CD8-positive, alpha-beta T cell (primary cell): ENCODE measurements at regions of chr9 and their contacts with region 1.

Region 1: GRCh38 chr9:129626079-129626624 is at the start of gene NTMT1:
- DNase-seq: peak; percentile 86 to 96 (median 92)
- ATAC-seq: peak; percentile 74
- H3K4me3 ChIP-seq: peak within 1 kb of the TSS; percentile 94 to 99
- H3K4me3 Mint-ChIP-seq: peak within 1 kb of the TSS; percentile 83
- H3K27ac ChIP-seq: peak within 1 kb of the TSS; percentile 95 to 98
- H3K27ac Mint-ChIP-seq: peak within 1 kb of the TSS; percentile 98
- H3K4me1 ChIP-seq: peaks cover 51% of the 10 kb centered on the region
- H3K4me1 Mint-ChIP-seq: peaks cover 56% of the 10 kb centered on the region
- H3K27me3 ChIP-seq: no peaks in the 10 kb centered on the region
- H3K27me3 Mint-ChIP-seq: peaks cover 11% of the 10 kb centered on the region
- CTCF ChIP-seq: no peak
- total RNA-seq, gene NTMT1: 48.1 to 51.1 TPM

Region 2: DNA sequence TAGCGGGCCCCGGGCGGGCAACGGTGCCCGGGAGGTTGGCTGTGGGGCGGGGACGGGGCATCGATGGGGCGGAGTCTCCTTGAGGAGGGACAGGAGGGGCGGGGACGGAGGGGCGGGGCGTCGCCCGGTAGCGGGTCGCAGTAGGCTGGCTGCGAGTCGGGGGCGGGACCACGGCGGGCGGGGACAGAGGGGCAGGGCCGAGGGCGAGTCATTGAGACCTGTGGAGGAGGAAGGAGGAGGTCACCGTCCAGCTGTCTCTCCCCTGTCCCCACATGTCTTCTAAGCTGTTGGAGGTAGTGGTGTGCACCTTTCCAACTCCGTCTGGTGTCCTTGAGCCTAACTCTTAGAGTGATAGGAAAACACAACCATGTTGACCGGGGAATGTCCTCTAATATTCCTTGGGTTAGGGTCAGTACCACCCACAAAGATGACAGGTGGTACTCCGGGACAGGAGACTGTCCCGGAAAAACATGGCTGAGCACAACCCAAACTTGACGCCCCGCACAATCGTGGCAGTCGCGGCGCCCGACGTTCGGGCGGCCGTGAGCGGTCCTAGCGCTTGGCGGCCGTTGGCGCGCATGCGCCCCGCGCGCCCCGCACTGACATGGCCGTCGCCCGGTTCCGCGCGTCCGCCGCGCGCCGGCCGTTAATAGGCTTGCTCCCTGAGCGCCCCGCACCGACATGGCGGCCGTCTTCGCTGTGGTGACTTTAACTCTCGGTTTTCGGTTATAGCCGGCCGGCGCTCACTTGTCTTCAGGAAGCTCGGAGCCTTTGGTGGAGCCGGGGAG is 515.2 kb before region 1 on chr9 and contains the starts of genes CRAT and PTPA:
- CTCF ChIA-PET with region 1: no interaction called
- POLR2A ChIA-PET with region 1: no interaction called
- intact Hi-C with region 1: loop called in 1 of 2 experiments (anchors 1 kb)
- DNase-seq: peak; percentile 91 to 97 (median 96)
- ATAC-seq: peak; percentile 88
- H3K4me3 ChIP-seq: peak within 1 kb of the TSS; percentile 69 to 85
- H3K4me3 Mint-ChIP-seq: peak within 1 kb of the TSS; percentile 93
- H3K27ac ChIP-seq: peak within 1 kb of the TSS; percentile 79 to 81
- H3K27ac Mint-ChIP-seq: peak within 1 kb of the TSS; percentile 91
- H3K4me1 ChIP-seq: peaks cover 21% of the 10 kb centered on the region
- H3K4me1 Mint-ChIP-seq: peaks cover 39% of the 10 kb centered on the region
- H3K27me3 ChIP-seq: no peaks in the 10 kb centered on the region
- H3K27me3 Mint-ChIP-seq: no peaks in the 10 kb centered on the region
- CTCF ChIP-seq: no peak
- total RNA-seq, gene CRAT: 5.6 to 6.3 TPM
- total RNA-seq, gene PTPA: 24.7 to 26.8 TPM

Region 3: GRCh38 chr9:129139993-129140396 is 486.2 kb before region 1 on chr9:
- CTCF ChIA-PET with region 1: interaction called, 152 read pairs
- POLR2A ChIA-PET with region 1: interaction called, 7 read pairs
- intact Hi-C with region 1: loop called (anchors 1 kb)
- DNase-seq: peak; percentile 35 to 92 (median 80)
- ATAC-seq: peak; percentile 89
- H3K4me3 ChIP-seq: peak overlapping the region; percentile 55 to 58
- H3K4me3 Mint-ChIP-seq: peak overlapping the region; percentile 90
- H3K27ac ChIP-seq: peak overlapping the region; percentile 86 to 94
- H3K27ac Mint-ChIP-seq: peak overlapping the region; percentile 95
- H3K4me1 ChIP-seq: peaks cover 36% of the 10 kb centered on the region
- H3K4me1 Mint-ChIP-seq: peaks cover 34% of the 10 kb centered on the region
- H3K27me3 ChIP-seq: no peaks in the 10 kb centered on the region
- H3K27me3 Mint-ChIP-seq: no peaks in the 10 kb centered on the region
- CTCF ChIP-seq: no peak

Region 4: DNA sequence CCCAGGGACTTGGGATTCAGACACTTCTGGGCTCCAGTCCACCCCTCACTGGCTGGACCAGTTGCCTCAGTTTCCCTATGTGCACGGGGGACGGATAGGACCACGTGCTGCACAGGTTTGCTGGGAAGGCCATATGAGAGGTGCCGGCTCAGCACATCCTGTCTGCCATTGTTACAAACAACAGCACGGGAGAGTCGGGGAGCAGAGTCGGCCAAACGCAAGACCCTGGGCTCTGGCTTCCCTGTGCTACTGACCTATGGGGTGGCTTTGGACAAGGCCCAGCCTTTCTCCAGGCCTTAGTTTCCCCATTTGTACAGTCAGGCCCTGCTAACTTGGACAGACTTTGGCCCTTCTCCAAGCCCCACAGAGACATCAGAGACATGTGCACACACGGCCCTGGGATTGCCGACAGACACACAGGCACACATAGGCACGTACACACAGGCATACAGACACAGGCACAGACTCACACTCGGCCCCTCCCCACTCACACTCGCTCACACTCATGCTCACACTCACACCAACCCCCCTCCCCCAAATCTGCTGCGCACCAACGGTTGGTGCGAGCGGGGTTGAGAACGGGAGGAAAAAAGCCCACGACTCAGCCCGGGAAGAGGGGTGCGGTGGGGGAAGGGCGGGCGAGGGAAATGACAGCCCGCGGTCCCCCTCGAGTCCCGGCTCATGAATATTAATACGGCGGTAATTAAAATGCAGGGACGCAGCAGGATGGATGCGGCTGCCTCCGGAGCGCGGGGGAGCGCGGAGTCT is 138.3 kb before region 1 on chr9:
- CTCF ChIA-PET with region 1: no interaction called
- POLR2A ChIA-PET with region 1: no interaction called
- intact Hi-C with region 1: loop called in 1 of 2 experiments (anchors 5 kb)
- DNase-seq: peak in 3 of 9 experiments; percentile 64 to 80 (median 64)
- ATAC-seq: peak; percentile 14
- H3K4me3 ChIP-seq: peak overlapping the region; percentile 55 to 58
- H3K4me3 Mint-ChIP-seq: peak overlapping the region; percentile 80
- H3K27ac ChIP-seq: peak overlapping the region; percentile 72 to 83
- H3K27ac Mint-ChIP-seq: peak overlapping the region; percentile 92
- H3K4me1 ChIP-seq: peaks cover 56% of the 10 kb centered on the region
- H3K4me1 Mint-ChIP-seq: peaks cover 42% of the 10 kb centered on the region
- H3K27me3 ChIP-seq: no peaks in the 10 kb centered on the region
- H3K27me3 Mint-ChIP-seq: no peaks in the 10 kb centered on the region
- CTCF ChIP-seq: no peak

Region 5: GRCh38 chr9:129569502-129570449 is 56.4 kb before region 1 on chr9:
- CTCF ChIA-PET with region 1: no interaction called
- POLR2A ChIA-PET with region 1: no interaction called
- intact Hi-C with region 1: no loop called
- DNase-seq: peak in 2 of 9 experiments; percentile 34 to 50
- ATAC-seq: no peak
- H3K4me3 ChIP-seq: peak overlapping the region in 1 of 2 experiments; percentile 11
- H3K4me3 Mint-ChIP-seq: peak overlapping the region; percentile 78
- H3K27ac ChIP-seq: no peak overlapping the region
- H3K27ac Mint-ChIP-seq: no peak overlapping the region
- H3K4me1 ChIP-seq: peaks cover 15% of the 10 kb centered on the region
- H3K4me1 Mint-ChIP-seq: peaks cover 12% of the 10 kb centered on the region
- H3K27me3 ChIP-seq: peaks cover 7 to 13% of the 10 kb centered on the region in 2 experiments
- H3K27me3 Mint-ChIP-seq: peaks cover 23% of the 10 kb centered on the region
- CTCF ChIP-seq: no peak

Region 6: DNA sequence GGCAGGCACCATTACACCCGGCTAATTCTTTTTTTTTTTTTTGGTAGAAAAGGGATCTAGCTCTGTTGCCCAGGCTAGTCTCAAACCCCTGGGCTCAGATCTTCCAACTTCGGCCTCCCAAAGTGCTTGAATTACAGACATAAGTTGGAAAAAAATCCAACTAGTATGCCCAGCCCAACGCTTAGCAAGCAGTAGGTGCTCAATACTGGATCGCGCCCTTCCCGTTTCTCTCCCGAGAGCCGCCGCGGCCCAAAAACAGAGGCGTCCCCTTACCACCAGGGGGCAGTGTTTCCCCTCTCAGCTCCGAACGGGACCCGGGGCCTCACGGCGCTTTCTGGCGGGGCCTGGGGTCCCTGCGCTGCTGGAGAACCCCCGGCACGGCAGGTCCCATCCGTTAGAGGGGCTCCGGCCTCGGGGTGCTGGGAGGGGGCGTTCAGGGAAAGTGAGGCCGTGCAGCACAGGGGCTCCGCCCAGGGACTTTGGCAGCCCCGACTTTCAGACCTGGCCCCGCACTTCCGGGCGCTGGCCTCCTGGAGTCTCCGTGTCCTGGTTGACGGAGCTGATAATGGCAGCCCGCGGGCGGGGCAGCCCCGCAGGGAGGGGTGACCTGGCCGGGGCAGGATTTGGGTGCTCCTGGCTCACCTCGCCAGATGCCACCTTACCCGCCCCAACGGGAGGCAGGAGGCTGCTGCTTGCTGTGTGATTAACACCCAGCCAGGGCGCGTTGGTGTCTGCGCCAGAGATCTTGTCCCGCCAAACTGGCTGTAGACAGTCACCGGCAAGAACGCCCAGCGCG is 111.5 kb after region 1 on chr9:
- CTCF ChIA-PET with region 1: interaction called, 3 read pairs
- POLR2A ChIA-PET with region 1: no interaction called
- intact Hi-C with region 1: loop called in 1 of 2 experiments (anchors 10 kb)
- DNase-seq: peak; percentile 72 to 95 (median 87)
- ATAC-seq: peak; percentile 85
- H3K4me3 ChIP-seq: peak overlapping the region; percentile 72 to 92
- H3K4me3 Mint-ChIP-seq: peak overlapping the region; percentile 76
- H3K27ac ChIP-seq: peak overlapping the region; percentile 50 to 77
- H3K27ac Mint-ChIP-seq: peak overlapping the region; percentile 60
- H3K4me1 ChIP-seq: peaks cover 9% of the 10 kb centered on the region
- H3K4me1 Mint-ChIP-seq: peaks cover 6% of the 10 kb centered on the region
- H3K27me3 ChIP-seq: no peaks in the 10 kb centered on the region
- H3K27me3 Mint-ChIP-seq: peaks cover 2% of the 10 kb centered on the region
- CTCF ChIP-seq: peak; percentile 96

Region 7: DNA sequence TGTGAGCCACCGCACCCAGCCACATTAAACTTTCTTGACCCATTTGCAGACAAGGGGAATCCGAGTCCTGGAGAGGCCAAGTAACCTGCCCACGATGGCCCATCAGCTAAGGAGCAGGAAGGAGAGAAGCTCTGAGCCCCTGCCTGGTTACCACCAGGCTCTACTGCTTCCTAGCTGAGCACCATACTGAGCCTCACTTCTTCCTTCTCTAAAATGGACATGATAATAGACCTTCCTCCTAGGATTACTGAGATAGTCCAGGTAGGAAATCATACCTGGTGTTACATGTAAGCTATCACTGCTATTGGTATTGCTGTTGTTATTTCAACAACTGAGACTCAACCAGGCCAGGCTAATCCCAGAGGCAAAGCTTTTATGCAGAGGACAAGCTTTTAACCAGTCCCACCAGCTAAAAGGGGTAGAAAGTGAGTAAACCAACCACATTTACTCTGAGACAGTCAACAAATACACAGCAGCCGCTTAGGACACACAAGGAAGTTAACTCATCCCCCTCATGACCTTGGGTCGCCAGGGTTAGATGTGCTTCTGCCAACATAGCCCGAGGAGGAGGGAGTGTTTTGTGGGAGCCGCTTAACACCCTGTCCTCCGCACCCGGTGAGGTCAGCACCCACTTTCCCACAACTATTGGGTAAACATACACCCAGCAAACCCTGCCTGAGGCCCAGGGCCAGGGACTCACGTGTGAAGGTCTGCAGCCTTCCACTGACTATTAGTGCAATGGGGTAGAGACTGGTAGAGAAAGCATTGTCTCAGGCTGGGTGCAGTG is 147.3 kb after region 1 on chr9:
- CTCF ChIA-PET with region 1: no interaction called
- POLR2A ChIA-PET with region 1: no interaction called
- intact Hi-C with region 1: no loop called
- DNase-seq: peak in 2 of 9 experiments; percentile 20 to 49
- ATAC-seq: no peak
- H3K4me3 ChIP-seq: no peak overlapping the region
- H3K4me3 Mint-ChIP-seq: no peak overlapping the region
- H3K27ac ChIP-seq: no peak overlapping the region
- H3K27ac Mint-ChIP-seq: no peak overlapping the region
- H3K4me1 ChIP-seq: peaks cover 11% of the 10 kb centered on the region
- H3K4me1 Mint-ChIP-seq: peaks cover 10% of the 10 kb centered on the region
- H3K27me3 ChIP-seq: no peaks in the 10 kb centered on the region
- H3K27me3 Mint-ChIP-seq: peaks cover 6% of the 10 kb centered on the region
- CTCF ChIP-seq: no peak